Esophagus muscularis mucosa (tissue), 4 donors: ENCODE measurements at regions of chr13 and their contacts with region 1.

Region 1: GRCh38 chr13:20566898-20567874 is at the start of gene IFT88:
- DNase-seq: peak; percentile 97
- H3K4me3 ChIP-seq: peak within 1 kb of the TSS; percentile 69 to 93 (median 83)
- H3K27ac ChIP-seq: peak within 1 kb of the TSS; percentile 90 to 96 (median 94)
- H3K4me1 ChIP-seq: peaks cover 10 to 18% (median 14%) of the 10 kb centered on the region in 4 donors
- H3K27me3 ChIP-seq: no peaks in the 10 kb centered on the region
- CTCF ChIP-seq: no peak
- EP300 ChIP-seq: no peak
- POLR2A ChIP-seq: no peak
- total RNA-seq, gene IFT88: 10.4 to 13.7 (median 11.5) TPM

Region 2: GRCh38 chr13:20525690-20526544 is 41.3 kb before region 1 on chr13 and contains the start of gene CRYL1:
- intact Hi-C with region 1: loop called (anchors 5 kb)
- DNase-seq: no peak
- H3K4me3 ChIP-seq: peak within 1 kb of the TSS; percentile 95 to 100 (median 98)
- H3K27ac ChIP-seq: peak within 1 kb of the TSS; percentile 85 to 92 (median 89)
- H3K4me1 ChIP-seq: peaks cover 18 to 31% (median 24%) of the 10 kb centered on the region in 4 donors
- H3K27me3 ChIP-seq: no peaks in the 10 kb centered on the region
- CTCF ChIP-seq: no peak
- EP300 ChIP-seq: peak; percentile 43
- POLR2A ChIP-seq: no peak
- total RNA-seq, gene CRYL1: 42.3 to 59.3 (median 45.4) TPM

Region 3: GRCh38 chr13:20616059-20616797 is 49.0 kb after region 1 on chr13:
- intact Hi-C with region 1: no loop called
- DNase-seq: no peak
- H3K4me3 ChIP-seq: no peak overlapping the region
- H3K27ac ChIP-seq: no peak overlapping the region
- H3K4me1 ChIP-seq: no peaks in the 10 kb centered on the region
- H3K27me3 ChIP-seq: no peaks in the 10 kb centered on the region
- CTCF ChIP-seq: no peak
- EP300 ChIP-seq: no peak
- POLR2A ChIP-seq: no peak